ENCODE measurements at regions of chr7 and their contacts with region 1.

Region 1: DNA sequence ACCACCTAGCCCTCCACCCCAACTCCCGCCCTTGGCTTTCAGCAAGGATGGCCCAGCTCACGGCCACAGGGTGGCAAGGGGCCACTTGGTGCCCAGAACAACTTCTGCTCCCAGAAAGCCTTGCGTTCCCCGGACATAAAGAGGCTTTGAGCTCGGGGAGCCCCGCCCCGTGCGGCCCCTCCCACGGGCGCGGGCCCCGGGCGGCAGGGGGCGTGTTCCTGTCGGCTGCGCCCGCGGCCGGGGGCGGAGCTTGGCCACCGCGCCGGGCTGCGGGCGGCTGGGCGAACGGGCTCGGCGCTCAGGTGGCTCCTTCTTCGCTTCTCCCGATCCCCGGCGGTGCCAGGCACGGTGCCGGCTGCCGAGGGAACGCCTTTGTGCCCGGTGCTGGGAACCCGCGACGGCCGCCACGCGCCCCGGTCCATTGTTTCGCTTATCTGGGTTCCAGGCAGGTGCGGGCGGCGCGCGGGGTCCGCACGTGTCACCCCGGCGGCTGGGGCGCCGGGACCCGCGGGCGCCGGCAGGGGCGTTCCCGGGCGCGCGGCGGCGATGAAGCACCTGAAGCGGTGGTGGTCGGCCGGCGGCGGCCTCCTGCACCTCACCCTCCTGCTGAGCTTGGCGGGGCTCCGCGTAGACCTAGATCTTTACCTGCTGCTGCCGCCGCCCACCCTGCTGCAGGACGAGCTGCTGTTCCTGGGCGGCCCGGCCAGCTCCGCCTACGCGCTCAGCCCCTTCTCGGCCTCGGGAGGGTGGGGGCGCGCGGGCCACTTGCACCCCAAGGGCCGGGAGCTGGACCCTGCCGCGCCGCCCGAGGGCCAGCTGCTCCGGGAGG is at the start of gene NFE2L3:
- DNase-seq: no peak
- ATAC-seq: peak; percentile 75
- H3K4me3 ChIP-seq: peak within 1 kb of the TSS; percentile 53 to 88
- H3K27ac ChIP-seq: peak within 1 kb of the TSS; percentile 95
- H3K4me1 ChIP-seq: peaks cover 19% of the 10 kb centered on the region
- H3K27me3 ChIP-seq: no peaks in the 10 kb centered on the region
- CTCF ChIP-seq: peak; percentile 39; the same call in 1 of the 2 replicates
- total RNA-seq, gene NFE2L3: 78.5 TPM

Region 2: DNA sequence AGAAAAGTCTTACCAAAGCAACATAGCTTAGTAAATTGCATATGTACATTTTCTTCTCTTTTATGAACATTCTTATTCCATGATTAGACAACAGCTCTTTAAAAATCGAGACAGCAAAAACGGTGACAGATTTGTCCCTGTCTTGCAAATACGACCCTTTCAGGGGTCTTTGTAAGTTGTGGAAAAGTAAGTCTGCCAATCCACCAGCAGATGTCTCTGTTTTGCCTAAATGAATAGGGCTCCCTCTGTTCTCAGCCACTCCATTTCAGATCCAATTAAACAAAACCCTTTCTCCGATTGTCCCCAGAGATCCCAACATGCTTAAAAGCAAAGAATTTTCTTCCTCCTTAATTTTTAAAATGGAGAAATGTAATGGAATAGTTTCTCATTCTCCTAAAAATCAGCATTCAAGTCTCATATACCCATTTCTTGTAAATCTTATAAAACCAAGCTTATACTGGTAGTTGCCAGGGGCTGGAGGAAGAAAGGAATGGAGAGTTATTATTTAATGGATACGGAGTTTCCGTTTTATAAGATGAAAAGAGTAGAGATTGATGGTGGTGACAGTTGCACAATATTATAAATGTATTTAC is 61.1 kb before region 1 on chr7:
- CTCF ChIA-PET with region 1: interaction called, 4 read pairs
- POLR2A ChIA-PET with region 1: interaction called, 4 read pairs
- in situ Hi-C with region 1: no loop called
- intact Hi-C with region 1: loop called (anchors 5 kb)
- DNase-seq: peak; percentile 67
- ATAC-seq: peak; percentile 89
- H3K4me3 ChIP-seq: no peak overlapping the region
- H3K27ac ChIP-seq: peak overlapping the region; percentile 32; the same call in 1 of the 2 replicates
- H3K4me1 ChIP-seq: peaks cover 6% of the 10 kb centered on the region; the same call in 1 of the 2 replicates
- H3K27me3 ChIP-seq: no peaks in the 10 kb centered on the region
- CTCF ChIP-seq: peak; percentile 88

Region 3: GRCh38 chr7:26136831-26137455 is 15.2 kb before region 1 on chr7:
- CTCF ChIA-PET with region 1: no interaction called
- POLR2A ChIA-PET with region 1: no interaction called
- in situ Hi-C with region 1: no loop called
- intact Hi-C with region 1: no loop called
- DNase-seq: no peak
- ATAC-seq: no peak
- H3K4me3 ChIP-seq: no peak overlapping the region
- H3K27ac ChIP-seq: no peak overlapping the region
- H3K4me1 ChIP-seq: no peaks in the 10 kb centered on the region
- H3K27me3 ChIP-seq: no peaks in the 10 kb centered on the region
- CTCF ChIP-seq: no peak

Region 4: DNA sequence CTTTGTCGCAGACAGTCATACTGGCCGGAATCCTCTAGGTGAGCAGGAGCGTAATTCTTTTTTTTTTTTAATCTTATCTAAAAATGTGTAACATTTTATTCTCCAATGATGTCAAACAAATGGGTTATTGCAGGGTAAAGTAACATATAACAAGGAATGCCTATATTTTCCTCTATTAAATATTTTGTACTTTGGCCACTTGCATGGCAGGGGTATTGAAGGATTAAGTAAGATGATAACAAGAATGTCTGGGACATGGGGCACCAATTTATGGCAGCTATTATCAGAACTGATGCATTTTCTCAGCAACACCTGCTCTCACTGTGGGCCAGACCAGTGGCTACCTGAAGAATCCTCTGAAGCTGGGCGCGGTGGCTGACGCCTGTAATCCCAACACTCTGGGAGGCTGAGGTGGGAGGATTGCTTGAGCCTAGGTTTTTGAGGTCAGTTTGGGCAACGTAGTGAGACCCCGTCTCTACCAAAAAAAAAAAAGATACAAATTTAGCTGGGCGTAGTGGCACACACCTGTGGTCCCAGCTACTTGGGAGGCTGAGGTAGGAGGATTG is 115.5 kb after region 1 on chr7:
- CTCF ChIA-PET with region 1: no interaction called
- POLR2A ChIA-PET with region 1: no interaction called
- in situ Hi-C with region 1: no loop called
- intact Hi-C with region 1: no loop called
- DNase-seq: no peak
- ATAC-seq: no peak
- H3K4me3 ChIP-seq: no peak overlapping the region
- H3K27ac ChIP-seq: no peak overlapping the region
- H3K4me1 ChIP-seq: no peaks in the 10 kb centered on the region
- H3K27me3 ChIP-seq: no peaks in the 10 kb centered on the region
- CTCF ChIP-seq: no peak

Measured in Panc1 (cell line).